Left colon (tissue), 2 donors: ENCODE measurements at regions of chr22 and their contacts with region 1.

Region 1: DNA sequence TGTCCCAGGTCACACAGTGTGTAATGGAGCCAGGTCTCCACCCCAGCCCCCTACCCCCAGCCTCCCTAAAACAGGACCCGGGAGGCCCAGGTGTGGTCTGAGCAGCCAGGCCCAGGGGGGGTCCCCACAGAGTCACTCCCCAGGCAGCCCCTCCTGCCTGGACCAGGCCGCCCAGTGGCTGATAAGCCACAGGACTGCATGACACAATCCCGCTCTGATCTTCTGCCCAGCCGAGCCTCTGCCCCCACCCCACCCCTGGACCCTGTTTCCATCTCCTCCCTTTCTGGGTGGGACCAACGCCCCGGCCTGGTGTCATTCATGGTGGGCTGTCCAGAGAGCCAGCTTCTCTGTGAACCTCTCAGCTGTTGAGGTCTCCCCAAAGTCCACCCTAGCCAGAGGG is 7.8 kb upstream of the LIF start:
- DNase-seq: peak in 1 of 2 donors; percentile 11
- ATAC-seq: no peak

Region 2: GRCh38 chr22:30104501-30105156 is 149.7 kb before region 1 on chr22:
- intact Hi-C with region 1: loop called in 1 of 2 experiments (anchors 2 kb)
- DNase-seq: no peak
- ATAC-seq: no peak

Region 3: DNA sequence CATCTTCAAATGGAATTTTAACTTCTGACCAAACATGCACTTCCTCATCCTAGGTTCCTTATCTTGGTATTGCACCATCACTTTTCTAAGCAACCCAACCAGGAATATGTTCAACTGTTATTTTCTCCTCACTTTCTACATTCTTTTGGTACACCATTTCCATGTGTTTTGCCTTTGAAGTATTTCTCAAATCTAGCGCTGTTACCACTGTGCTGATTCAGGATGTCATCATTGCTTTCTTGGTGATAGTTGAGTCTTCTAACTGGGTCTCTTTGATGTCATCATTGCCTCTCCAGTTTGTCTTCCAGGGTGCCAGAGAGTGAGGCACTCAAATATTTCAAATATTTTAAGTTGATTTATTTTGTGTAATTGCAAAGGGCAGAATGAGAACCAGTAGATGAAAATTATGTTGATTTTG is 126.6 kb before region 1 on chr22:
- intact Hi-C with region 1: no loop called
- DNase-seq: no peak
- ATAC-seq: no peak